Dendritic cell treated with granulocyte-macrophage colony-stimulating factor and Interleukin-4, amounts not matched to agents 40 ng/mL and 50 ng/mL, for 4 days (primary cell): ENCODE measurements at regions of chr14 and their contacts with region 1.

Region 1: DNA sequence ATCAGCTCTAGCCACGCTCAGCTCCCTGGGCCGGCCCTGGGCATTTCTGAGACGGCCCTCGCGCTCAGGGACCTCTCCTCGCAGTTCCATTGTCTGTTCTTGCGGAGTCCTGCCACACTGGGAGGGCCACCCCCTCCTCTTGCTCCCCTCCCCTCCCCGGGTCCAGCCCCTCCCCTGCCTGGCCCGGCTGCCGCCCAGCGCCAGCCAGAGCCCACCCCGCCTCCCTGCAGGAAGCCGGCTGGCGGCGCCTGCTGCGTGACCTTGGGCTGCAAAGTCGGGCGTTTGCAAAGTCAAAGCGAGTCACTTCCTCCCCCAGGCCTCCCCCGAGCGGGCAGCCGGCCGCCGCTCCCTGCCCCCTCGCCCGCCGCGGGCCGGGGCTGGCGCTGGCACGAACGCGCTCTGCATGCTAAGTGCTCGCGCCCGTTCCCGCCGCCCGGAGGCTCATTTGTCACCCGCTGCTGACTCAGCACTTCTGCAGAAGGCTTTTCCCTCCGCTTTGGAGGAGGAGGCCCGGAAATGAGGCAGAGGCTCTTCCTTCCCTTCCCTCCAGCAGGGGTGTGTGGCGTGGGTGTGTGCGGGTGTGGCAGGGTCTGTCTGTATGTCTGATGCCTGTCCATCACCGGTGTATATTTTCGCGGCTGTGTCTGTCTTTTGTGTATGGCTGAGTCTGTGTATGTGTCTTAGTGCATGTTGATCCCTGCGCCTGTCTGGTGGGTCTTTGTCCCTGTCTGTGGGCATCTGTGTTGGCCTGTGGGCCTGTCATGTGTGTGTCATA is 72.0 kb downstream of the IRF2BPL start:
- H3K4me3 Mint-ChIP-seq: peak overlapping the region; percentile 66
- H3K27ac Mint-ChIP-seq: peak overlapping the region; percentile 97
- H3K4me1 Mint-ChIP-seq: peaks cover 81% of the 10 kb centered on the region
- H3K27me3 Mint-ChIP-seq: no peaks in the 10 kb centered on the region

Region 2: DNA sequence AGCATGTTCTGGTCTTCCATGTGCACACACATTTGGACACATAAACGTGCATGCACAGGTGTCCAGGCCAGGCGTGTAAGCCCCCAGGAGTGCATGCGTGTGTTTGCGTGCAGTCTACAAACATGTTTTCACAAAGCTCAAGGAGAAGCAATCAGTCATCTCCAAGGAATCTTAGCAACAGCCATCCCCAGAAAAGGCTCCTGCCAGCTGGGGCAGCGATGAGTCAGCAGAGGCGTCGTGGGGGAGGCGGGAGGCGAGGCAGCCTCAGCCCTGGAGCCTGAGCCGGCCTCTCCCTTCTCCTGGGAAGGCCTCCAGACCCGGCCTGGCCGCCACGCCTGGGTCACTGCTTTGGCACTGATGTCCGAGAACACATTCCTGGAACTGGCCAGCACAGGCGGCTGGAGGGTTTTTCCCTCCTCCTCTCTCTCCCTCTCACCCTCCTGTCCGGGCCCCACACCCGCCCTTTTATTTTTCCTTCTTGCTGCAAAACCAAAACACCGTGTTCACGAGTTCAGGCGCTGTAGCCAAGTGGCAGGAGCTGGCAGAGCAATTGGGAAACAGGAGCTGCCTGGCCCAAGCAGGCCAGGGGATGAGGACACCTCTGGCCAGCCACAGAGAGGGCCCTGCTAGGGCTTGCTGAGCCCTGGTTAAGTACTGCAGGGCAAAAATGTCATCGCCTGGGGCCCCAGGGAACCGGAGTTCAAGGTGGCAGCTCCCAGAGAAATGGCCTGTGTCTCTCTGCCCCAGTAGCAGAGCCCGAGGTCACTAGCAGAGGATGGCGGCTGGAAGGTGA is 37.6 kb before region 1 on chr14:
- intact Hi-C with region 1: loop called (anchors 2 kb)
- H3K4me3 Mint-ChIP-seq: peak overlapping the region; percentile 30
- H3K27ac Mint-ChIP-seq: peak overlapping the region; percentile 96
- H3K4me1 Mint-ChIP-seq: peaks cover 76% of the 10 kb centered on the region
- H3K27me3 Mint-ChIP-seq: peaks cover 23% of the 10 kb centered on the region

Region 3: GRCh38 chr14:77040059-77040740 is 83.7 kb after region 1 on chr14:
- intact Hi-C with region 1: loop called (anchors 5 kb)
- H3K4me3 Mint-ChIP-seq: peak overlapping the region; percentile 42
- H3K27ac Mint-ChIP-seq: peak overlapping the region; percentile 92
- H3K4me1 Mint-ChIP-seq: peaks cover 89% of the 10 kb centered on the region
- H3K27me3 Mint-ChIP-seq: no peaks in the 10 kb centered on the region